Endothelial cell of umbilical vein (primary cell): ENCODE measurements at regions of chr3 and their contacts with region 1.

Region 1: DNA sequence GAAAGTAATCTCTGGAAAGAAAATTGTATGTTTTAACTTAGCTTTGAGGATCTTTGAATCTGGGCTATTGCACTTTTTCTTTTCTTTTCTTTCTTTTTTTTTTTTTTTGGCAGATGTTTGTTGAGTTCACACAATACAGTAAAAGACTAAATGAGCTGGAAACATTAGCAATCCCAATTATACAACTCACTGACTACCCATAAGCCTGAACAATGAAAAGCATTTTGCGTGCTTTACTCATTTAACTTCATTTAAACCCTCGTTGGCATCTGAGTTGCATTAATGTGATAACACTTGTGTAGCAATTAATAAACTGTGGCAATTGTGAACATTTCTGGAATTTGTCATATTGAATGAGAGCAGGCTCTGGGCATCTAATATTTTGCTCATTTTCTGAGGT is 269.4 kb upstream of the RBMS3 start:
- DNase-seq: no peak
- H3K4me3 ChIP-seq: no peak overlapping the region
- H3K27ac ChIP-seq: no peak overlapping the region
- H3K4me1 ChIP-seq: no peaks in the 10 kb centered on the region
- H3K27me3 ChIP-seq: no peaks in the 10 kb centered on the region
- CTCF ChIP-seq: no peak
- POLR2A ChIP-seq: no peak

Region 2: DNA sequence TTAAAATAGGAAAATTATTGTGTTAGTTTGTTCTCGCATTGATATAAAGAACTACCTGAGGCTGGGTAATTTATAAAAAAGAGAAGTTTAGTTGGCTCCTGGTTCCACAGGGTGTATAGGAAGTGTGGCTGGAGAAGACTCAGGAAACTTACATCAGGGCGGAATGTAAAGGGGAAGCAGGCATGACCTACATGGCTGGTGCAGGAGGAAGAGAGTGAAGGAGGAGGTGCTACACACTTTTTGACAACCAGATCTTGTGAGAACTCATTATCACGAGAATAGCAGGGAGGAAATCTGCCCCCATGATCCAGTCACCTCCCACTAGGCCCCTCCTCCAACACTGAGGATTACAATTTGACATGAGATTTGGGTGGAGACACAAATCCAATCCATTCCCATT is 760.2 kb after region 1 on chr3:
- CTCF ChIA-PET with region 1: no interaction called
- POLR2A ChIA-PET with region 1: no interaction called
- dilution Hi-C with region 1: no loop called
- intact Hi-C with region 1: loop called (anchors 5 kb)
- DNase-seq: no peak
- H3K4me3 ChIP-seq: no peak overlapping the region
- H3K27ac ChIP-seq: no peak overlapping the region
- H3K4me1 ChIP-seq: no peaks in the 10 kb centered on the region
- H3K27me3 ChIP-seq: no peaks in the 10 kb centered on the region
- CTCF ChIP-seq: no peak
- POLR2A ChIP-seq: no peak